Activated CD8-positive, alpha-beta T cell treated with anti-CD3 and anti-CD28 coated beads for 36 hours (primary cell): ENCODE measurements at regions of chr2 and their contacts with region 1.

Region 1: GRCh38 chr2:30225131-30225762 is 6.1 kb upstream of the LBH start:
- DNase-seq: peak; percentile 53
- ATAC-seq: peak; percentile 45
- H3K4me3 Mint-ChIP-seq: peak overlapping the region; percentile 87
- H3K27ac Mint-ChIP-seq: peak overlapping the region; percentile 99
- H3K4me1 Mint-ChIP-seq: peaks cover 74% of the 10 kb centered on the region
- H3K27me3 Mint-ChIP-seq: no peaks in the 10 kb centered on the region
- CTCF ChIP-seq: no peak

Region 2: GRCh38 chr2:30146438-30147147 is 78.7 kb before region 1 on chr2 and contains the start of gene YPEL5:
- CTCF ChIA-PET with region 1: interaction called, 3 read pairs
- POLR2A ChIA-PET with region 1: interaction called, 6 read pairs
- intact Hi-C with region 1: loop called (anchors 5 kb)
- DNase-seq: peak; percentile 99
- ATAC-seq: peak; percentile 92
- H3K4me3 Mint-ChIP-seq: peak within 1 kb of the TSS; percentile 85
- H3K27ac Mint-ChIP-seq: peak within 1 kb of the TSS; percentile 98
- H3K4me1 Mint-ChIP-seq: peaks cover 51% of the 10 kb centered on the region
- H3K27me3 Mint-ChIP-seq: no peaks in the 10 kb centered on the region
- CTCF ChIP-seq: no peak
- total RNA-seq, gene YPEL5: 28.0 to 28.4 TPM

Region 3: DNA sequence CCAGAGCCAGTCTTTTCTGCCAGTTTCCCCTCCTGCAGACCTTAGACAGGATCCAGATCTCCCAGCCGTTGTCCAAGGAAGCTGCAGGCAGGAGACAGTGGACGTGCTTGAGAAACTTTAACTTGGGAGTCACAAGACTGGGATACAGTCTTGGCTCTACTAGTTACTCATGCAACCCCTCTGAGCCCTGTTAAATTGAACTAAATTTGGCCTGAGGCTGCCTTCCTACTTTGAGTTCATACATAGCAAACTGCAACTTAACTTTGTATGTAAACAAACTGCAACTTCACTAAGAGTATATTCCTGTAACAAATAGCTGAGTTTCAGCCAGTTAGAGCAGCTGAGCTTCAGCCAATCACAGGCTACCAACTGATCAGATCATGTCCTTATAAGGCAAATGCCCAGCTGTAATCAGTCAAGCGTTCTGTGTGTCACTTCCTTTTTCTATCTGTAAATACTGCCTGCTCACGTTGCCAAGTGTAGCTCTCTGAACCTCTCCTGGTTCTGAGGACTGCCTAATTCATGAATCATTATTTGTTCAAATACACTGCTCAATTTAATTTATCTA is 441.1 kb after region 1 on chr2:
- CTCF ChIA-PET with region 1: no interaction called
- POLR2A ChIA-PET with region 1: no interaction called
- intact Hi-C with region 1: no loop called
- DNase-seq: no peak
- ATAC-seq: peak; percentile 62
- H3K4me3 Mint-ChIP-seq: no peak overlapping the region
- H3K27ac Mint-ChIP-seq: no peak overlapping the region
- H3K4me1 Mint-ChIP-seq: peaks cover 5% of the 10 kb centered on the region
- H3K27me3 Mint-ChIP-seq: no peaks in the 10 kb centered on the region
- CTCF ChIP-seq: no peak